HepG2 (cell line): ENCODE measurements at regions of chr14 and their contacts with region 1.

Region 1: DNA sequence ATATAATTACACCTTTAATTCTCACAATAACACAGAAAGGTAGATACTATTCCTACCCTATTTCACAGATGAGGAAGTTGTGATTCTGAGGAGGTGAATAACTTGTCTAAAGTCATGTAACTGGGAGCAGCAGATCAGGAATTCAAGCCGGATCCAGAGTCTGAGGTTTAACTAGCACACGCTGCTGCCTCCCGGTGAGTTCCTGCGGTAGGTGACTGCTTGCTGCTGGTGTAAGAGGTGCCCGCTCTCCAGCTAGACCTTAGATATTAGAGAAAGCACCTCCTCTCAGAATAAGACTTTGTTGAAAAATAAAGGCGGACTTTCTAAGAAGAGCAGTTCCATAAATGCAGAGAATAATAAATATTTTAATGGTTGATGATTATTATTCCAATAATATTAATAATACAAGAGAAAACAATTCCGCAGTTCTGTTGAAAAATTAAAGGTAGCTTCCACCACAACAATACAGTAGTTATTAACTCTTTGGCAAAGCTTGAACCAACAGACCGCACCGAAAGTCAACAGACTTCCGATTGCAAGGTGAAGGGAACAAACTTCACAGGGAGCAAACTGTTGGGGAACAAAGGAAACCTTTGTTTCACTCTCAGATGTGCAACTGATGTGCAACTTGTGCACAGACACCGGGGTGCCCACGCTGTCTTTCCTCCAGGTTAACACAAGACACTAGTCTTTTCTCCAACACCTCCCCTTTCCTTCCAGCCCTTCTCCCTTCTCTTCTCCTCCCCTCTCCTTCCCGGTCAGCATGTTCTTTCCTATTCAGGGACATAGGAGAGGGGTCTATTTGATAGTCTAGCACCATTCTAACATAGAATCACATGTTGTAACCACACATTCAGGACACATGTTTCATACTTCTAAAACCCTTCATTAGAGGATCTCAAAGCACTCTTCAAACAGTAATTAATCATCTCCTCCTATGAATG is 73.2 kb upstream of the EGLN3 start:
- DNase-seq: peak; percentile 100
- ATAC-seq: peak; percentile 96
- H3K4me3 ChIP-seq: peak overlapping the region; percentile 26 to 60 (median 58)
- H3K27ac ChIP-seq: peak overlapping the region; percentile 92
- H3K4me1 ChIP-seq: peaks cover 68% of the 10 kb centered on the region
- H3K27me3 ChIP-seq: no peaks in the 10 kb centered on the region
- CTCF ChIP-seq: peak; percentile 69
- EP300 ChIP-seq: peak; percentile 99
- POLR2A ChIP-seq: peak; percentile 34 to 58; a peak in 2 of 4 replicates
- RAD21 ChIP-seq: peak; percentile 66

Region 2: GRCh38 chr14:33848706-33849454 is 175.2 kb before region 1 on chr14:
- CTCF ChIA-PET with region 1: interaction called, 4 read pairs
- POLR2A ChIA-PET with region 1: no interaction called
- in situ Hi-C with region 1: no loop called
- intact Hi-C with region 1: loop called (anchors 1 kb)
- DNase-seq: peak; percentile 81
- ATAC-seq: peak; percentile 97
- H3K4me3 ChIP-seq: no peak overlapping the region
- H3K27ac ChIP-seq: no peak overlapping the region
- H3K4me1 ChIP-seq: peaks cover 4% of the 10 kb centered on the region; the same call in 1 of the 2 replicates
- H3K27me3 ChIP-seq: peaks cover 0 to 5% of the 10 kb centered on the region in 2 experiments; a peak in 1 of 5 replicates
- CTCF ChIP-seq: peak; percentile 89
- EP300 ChIP-seq: no peak
- POLR2A ChIP-seq: no peak
- RAD21 ChIP-seq: peak; percentile 95

Region 3: DNA sequence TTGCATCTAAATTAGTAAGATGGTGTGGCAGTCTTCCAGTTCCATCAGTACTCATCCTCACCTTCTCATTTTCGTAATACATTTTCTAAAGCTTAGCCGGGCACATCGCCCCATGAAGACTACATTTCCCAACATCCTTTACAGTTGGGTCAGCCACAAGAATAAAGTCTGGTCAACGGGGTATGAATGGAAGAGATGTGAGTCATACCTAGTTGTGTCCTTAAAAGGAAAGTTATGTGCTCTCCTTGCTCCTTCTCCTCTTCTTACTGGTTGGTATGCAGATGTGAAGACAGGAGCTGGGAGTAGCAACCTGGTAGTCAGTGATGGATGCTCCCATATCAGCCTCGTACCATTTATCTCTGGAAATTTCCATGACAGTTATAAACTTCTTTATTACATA is 37.3 kb before region 1 on chr14:
- CTCF ChIA-PET with region 1: no interaction called
- POLR2A ChIA-PET with region 1: interaction called, 9 read pairs
- in situ Hi-C with region 1: no loop called
- intact Hi-C with region 1: loop called (anchors 1 kb)
- DNase-seq: no peak
- ATAC-seq: peak; percentile 6; the same call in 1 of the 3 replicates
- H3K4me3 ChIP-seq: no peak overlapping the region
- H3K27ac ChIP-seq: no peak overlapping the region
- H3K4me1 ChIP-seq: peaks cover 35% of the 10 kb centered on the region
- H3K27me3 ChIP-seq: no peaks in the 10 kb centered on the region
- CTCF ChIP-seq: no peak
- EP300 ChIP-seq: no peak
- POLR2A ChIP-seq: no peak
- RAD21 ChIP-seq: no peak

Region 4: GRCh38 chr14:34003691-34004090 is 20.4 kb before region 1 on chr14:
- CTCF ChIA-PET with region 1: no interaction called
- POLR2A ChIA-PET with region 1: no interaction called
- in situ Hi-C with region 1: no loop called
- intact Hi-C with region 1: no loop called
- DNase-seq: no peak
- ATAC-seq: no peak
- H3K4me3 ChIP-seq: no peak overlapping the region
- H3K27ac ChIP-seq: no peak overlapping the region
- H3K4me1 ChIP-seq: peaks cover 6% of the 10 kb centered on the region; the same call in 1 of the 2 replicates
- H3K27me3 ChIP-seq: peaks cover 5 to 41% of the 10 kb centered on the region in 2 experiments; a peak in 4 of 5 replicates
- CTCF ChIP-seq: no peak
- EP300 ChIP-seq: no peak
- POLR2A ChIP-seq: no peak
- RAD21 ChIP-seq: no peak

Region 5: GRCh38 chr14:34043627-34044372 is 19.7 kb after region 1 on chr14:
- CTCF ChIA-PET with region 1: no interaction called
- POLR2A ChIA-PET with region 1: interaction called, 69 read pairs
- in situ Hi-C with region 1: no loop called
- intact Hi-C with region 1: loop called (anchors 1 kb)
- DNase-seq: peak; percentile 99
- ATAC-seq: peak; percentile 90
- H3K4me3 ChIP-seq: no peak overlapping the region
- H3K27ac ChIP-seq: peak overlapping the region; percentile 62
- H3K4me1 ChIP-seq: peaks cover 75% of the 10 kb centered on the region
- H3K27me3 ChIP-seq: no peaks in the 10 kb centered on the region
- CTCF ChIP-seq: peak; percentile 38; the same call in 1 of the 2 replicates
- EP300 ChIP-seq: peak in 1 of 2 experiments; percentile 98; a peak in 3 of 4 replicates
- POLR2A ChIP-seq: peak in 1 of 2 experiments; percentile 73; a peak in 1 of 4 replicates
- RAD21 ChIP-seq: no peak

Region 6: DNA sequence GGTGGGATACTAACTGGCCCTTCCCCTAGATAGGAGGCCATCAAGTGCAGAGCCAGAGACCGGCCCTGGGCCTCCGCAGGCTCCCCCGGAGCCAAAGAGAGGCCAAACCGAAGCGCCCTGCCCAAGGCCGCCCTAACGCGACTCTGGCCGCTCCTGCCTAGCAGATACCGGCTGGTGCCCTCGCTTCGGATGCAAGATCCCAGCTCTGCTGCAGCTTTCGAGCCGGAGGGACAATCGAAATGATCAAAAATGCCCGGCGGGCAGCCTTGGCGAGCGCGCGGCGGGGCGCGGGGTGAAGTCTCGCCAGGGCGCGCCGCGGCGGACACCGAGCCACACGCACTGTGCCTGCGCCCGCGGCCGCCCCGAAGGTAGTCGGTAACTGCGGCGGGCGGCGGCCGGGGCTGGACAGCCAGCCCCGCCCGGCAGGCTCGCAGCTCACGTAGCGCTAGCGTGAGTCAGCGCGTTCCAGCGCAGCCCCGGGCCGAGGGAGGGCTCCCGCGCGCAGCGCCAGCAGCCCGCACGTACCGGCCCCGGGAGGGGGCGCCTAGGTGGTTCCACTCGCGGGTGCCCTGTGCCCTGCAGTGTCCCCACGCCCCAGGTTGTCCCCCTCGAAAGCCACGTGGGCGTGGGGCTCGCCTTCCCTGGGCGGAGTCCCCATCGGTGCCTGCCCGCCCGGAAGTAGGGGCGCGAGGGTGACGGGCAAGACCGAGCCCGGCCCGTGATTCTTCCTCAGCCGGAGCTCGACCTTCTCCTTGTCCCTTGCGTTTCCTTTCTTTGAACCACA is 36.0 kb after region 1 on chr14:
- CTCF ChIA-PET with region 1: no interaction called
- POLR2A ChIA-PET with region 1: interaction called, 13 read pairs
- in situ Hi-C with region 1: no loop called
- intact Hi-C with region 1: loop called (anchors 1 kb)
- DNase-seq: peak; percentile 56
- ATAC-seq: peak; percentile 96
- H3K4me3 ChIP-seq: peak overlapping the region; percentile 28 to 66 (median 41); a peak in 5 of 6 replicates
- H3K27ac ChIP-seq: peak overlapping the region; percentile 26
- H3K4me1 ChIP-seq: peaks cover 71% of the 10 kb centered on the region
- H3K27me3 ChIP-seq: no peaks in the 10 kb centered on the region; a peak in 2 of 5 replicates
- CTCF ChIP-seq: peak; percentile 75
- EP300 ChIP-seq: peak; percentile 22 to 64; a peak in 2 of 4 replicates
- POLR2A ChIP-seq: peak in 1 of 2 experiments; percentile 67; a peak in 2 of 4 replicates
- RAD21 ChIP-seq: peak; percentile 77

Region 7: DNA sequence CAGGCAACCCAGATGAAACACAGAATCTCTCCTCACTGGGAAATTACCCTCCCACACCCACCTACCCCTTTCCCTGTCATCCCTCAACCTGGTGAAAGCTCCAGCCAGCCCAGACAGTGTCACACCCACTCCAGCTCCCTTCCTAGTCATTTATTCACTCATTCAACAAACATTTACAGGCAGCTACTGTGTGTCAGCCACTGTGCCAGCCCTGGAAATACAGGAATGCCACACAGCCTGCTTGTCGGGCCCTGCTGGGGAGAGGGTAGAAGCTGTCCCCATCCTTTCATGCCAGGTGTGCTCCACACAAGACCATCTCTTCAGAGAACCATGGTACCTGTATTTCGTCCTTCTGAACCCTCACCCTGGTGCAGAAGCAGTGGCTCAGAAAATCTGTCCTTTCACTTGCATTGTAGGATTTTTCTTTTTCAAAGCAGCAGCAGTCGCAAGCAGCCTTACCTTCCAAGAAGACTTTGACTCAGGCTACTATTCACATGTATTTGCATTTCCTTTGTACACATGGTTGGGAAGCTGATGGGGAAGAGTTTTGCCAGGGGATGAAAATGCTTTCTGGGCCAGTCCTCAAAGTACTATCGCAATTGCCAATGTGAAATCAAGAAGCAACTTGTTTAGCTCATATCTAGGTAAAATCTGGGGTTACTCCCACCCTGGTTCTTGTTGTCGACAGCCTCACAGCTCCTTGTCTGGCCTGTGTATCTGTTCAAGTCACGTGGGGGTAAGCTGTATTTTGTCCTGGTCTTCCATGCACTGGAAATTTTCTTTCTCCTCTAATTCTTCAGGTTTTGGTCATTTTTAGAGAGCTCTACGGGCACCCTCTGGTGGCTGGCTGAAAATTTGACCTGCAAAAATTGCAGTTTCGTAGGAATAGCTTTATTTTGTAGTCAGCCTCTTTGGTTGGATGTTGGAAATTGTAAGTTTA is 74.2 kb after region 1 on chr14:
- CTCF ChIA-PET with region 1: no interaction called
- POLR2A ChIA-PET with region 1: interaction called, 18 read pairs
- in situ Hi-C with region 1: no loop called
- intact Hi-C with region 1: loop called (anchors 1 kb)
- DNase-seq: peak; percentile 68
- ATAC-seq: peak; percentile 66
- H3K4me3 ChIP-seq: 0 out of 6 replicates have a peak overlapping the region, but pooled peaks of 1 of the 3 experiments have one; percentile 0
- H3K27ac ChIP-seq: no peak overlapping the region
- H3K4me1 ChIP-seq: peaks cover 29% of the 10 kb centered on the region
- H3K27me3 ChIP-seq: peaks cover 0 to 33% of the 10 kb centered on the region in 2 experiments; a peak in 2 of 5 replicates
- CTCF ChIP-seq: peak; percentile 91
- EP300 ChIP-seq: no peak; a peak in 1 of 4 replicates
- POLR2A ChIP-seq: no peak
- RAD21 ChIP-seq: peak; percentile 95; the same call in 1 of the 2 replicates